ENCODE measurements at regions of chr6 and their contacts with region 1.

Region 1: DNA sequence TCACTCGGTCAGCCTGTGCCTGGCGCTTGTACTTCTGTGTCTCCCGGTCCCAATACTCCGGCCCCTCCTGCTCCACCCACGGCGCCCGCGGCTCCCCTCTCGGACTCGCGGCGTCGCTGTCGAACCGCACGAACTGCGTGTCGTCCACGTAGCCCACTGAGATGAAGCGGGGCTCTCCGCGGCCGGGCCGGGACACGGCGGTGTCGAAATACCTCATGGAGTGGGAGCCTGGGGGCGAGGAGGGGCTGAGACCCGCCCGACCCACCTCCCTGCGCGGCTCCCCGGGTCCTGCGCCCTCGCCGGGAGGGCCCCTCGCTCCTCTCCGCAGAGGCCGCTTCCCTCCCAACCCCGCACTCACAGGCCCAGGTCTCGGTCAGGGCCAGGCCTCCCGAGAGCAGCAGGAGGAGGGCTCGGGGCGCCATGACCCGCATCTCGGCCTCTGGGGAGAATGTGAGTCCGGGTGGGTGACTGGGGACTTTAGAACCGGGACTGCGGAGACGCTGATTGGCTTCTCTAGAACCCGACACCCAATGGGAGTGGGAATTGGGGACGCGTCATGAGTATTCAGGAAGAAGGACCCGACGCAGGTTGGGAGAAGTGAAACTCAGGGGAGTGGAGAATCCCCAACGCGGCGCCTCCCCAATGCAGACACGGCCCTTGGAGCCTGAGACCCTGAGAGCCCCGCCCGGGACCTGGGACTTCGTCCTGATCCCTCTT is at the start of gene HLA-C:
- DNase-seq: peak; percentile 95
- ATAC-seq: peak; percentile 97
- H3K4me3 ChIP-seq: peak within 1 kb of the TSS; percentile 58
- H3K27ac ChIP-seq: peak within 1 kb of the TSS; percentile 44
- H3K4me1 ChIP-seq: no peaks in the 10 kb centered on the region; the same call in 1 of the 2 replicates
- H3K27me3 ChIP-seq: peaks cover 3% of the 10 kb centered on the region
- CTCF ChIP-seq: 0 out of 2 replicates have a peak, but pooled peaks have one; percentile 11
- POLR2A ChIP-seq: peak; percentile 64
- RAD21 ChIP-seq: no peak
- total RNA-seq, gene HLA-C: 8.8 and 10.6 TPM in 2 replicates

Region 2: GRCh38 chr6:31139599-31139998 is 132.2 kb before region 1 on chr6:
- CTCF ChIA-PET with region 1: no interaction called
- POLR2A ChIA-PET with region 1: no interaction called
- dilution Hi-C with region 1: no loop called
- in situ Hi-C with region 1: no loop called
- intact Hi-C with region 1: loop called (anchors 5 kb)
- DNase-seq: peak; percentile 46
- ATAC-seq: peak; percentile 25
- H3K4me3 ChIP-seq: no peak overlapping the region
- H3K27ac ChIP-seq: no peak overlapping the region
- H3K4me1 ChIP-seq: peaks cover 13% of the 10 kb centered on the region
- H3K27me3 ChIP-seq: no peaks in the 10 kb centered on the region
- CTCF ChIP-seq: no peak
- POLR2A ChIP-seq: no peak
- RAD21 ChIP-seq: no peak

Region 3: GRCh38 chr6:31197559-31198305 is 74.1 kb before region 1 on chr6:
- CTCF ChIA-PET with region 1: no interaction called
- POLR2A ChIA-PET with region 1: no interaction called
- dilution Hi-C with region 1: no loop called
- in situ Hi-C with region 1: no loop called
- intact Hi-C with region 1: loop called (anchors 5 kb)
- DNase-seq: peak; percentile 72
- ATAC-seq: peak; percentile 90
- H3K4me3 ChIP-seq: peak overlapping the region; percentile 91
- H3K27ac ChIP-seq: peak overlapping the region; percentile 87
- H3K4me1 ChIP-seq: peaks cover under 1% of the 10 kb centered on the region; the same call in 1 of the 2 replicates
- H3K27me3 ChIP-seq: no peaks in the 10 kb centered on the region
- CTCF ChIP-seq: no peak
- POLR2A ChIP-seq: peak; percentile 59; the same call in 1 of the 2 replicates
- RAD21 ChIP-seq: no peak

Region 4: DNA sequence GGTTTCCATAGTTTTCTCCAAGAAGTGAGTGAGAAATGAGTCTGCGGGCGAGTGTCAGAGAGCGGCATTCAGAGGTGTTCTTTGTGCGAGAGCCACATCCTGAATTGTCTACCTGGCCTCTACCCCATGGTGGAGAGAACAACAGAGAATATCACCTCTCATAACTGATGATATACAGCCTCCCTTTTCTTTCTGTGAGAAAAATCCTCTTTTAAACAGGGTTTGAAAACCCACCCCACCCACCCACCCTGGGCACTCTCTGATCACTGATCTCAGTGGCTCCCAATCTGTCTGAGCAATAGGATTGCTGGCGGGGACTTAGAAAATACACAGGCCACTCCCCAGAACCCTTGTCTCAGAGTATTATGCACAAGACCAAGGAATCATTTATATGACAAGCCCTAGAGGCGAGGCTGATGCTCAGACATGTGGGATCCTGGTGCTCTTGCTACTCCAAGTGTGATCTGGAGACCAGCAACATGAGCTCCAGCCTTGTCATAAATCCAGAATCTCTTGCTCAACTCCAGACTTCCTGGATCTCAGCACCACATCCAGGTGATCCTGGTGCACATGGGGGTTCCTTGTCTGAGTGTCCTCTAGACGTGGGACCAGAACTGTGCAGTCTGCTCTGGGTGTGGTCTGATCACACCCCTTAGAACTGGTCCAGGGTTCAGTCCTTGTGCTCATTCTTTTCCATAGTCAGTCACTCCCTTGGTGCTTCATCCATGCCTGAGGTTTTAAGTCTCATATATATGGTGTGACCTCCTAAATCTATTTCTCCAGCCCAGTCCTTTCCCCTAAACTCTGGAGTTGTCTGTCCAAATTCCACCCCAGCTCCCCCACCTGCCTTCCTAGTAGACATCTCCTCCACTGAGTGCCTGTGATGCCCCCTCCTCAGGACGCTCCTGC is 79.9 kb after region 1 on chr6:
- CTCF ChIA-PET with region 1: no interaction called
- POLR2A ChIA-PET with region 1: no interaction called
- dilution Hi-C with region 1: no loop called
- in situ Hi-C with region 1: no loop called
- intact Hi-C with region 1: loop called (anchors 2 kb)
- DNase-seq: no peak
- ATAC-seq: no peak
- H3K4me3 ChIP-seq: no peak overlapping the region
- H3K27ac ChIP-seq: no peak overlapping the region
- H3K4me1 ChIP-seq: peaks cover 4% of the 10 kb centered on the region; the same call in 1 of the 2 replicates
- H3K27me3 ChIP-seq: peaks cover 31% of the 10 kb centered on the region
- CTCF ChIP-seq: no peak
- POLR2A ChIP-seq: no peak
- RAD21 ChIP-seq: no peak

Region 5: DNA sequence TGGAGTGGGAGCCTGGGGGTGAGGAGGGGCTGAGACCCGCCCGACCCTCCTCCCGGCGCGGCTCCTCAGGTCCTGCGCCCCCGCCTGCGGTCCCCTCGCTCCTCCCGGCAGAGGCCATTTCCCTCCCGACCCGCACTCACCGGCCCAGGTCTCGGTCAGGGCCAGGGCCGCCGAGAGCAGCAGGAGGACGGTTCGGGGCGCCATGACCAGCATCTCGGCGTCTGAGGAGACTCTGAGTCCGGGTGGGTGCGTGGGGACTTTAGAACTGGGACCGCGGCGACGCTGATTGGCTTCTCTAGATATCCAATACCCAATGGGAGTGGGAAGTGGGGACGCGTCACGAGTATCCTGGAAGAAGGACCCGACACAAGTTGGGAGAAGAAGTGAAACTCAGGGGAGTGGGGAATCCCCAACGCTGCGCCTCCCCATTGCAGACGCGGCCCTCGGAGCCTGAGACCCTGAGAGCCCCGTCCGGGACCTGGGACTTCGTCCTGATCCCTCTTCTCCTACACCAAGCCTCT is 85.2 kb after region 1 on chr6 and contains the start of gene HLA-B:
- CTCF ChIA-PET with region 1: no interaction called
- POLR2A ChIA-PET with region 1: no interaction called
- dilution Hi-C with region 1: no loop called
- in situ Hi-C with region 1: no loop called
- intact Hi-C with region 1: loop called (anchors 1 kb)
- DNase-seq: peak; percentile 87
- ATAC-seq: peak; percentile 96
- H3K4me3 ChIP-seq: peak within 1 kb of the TSS; percentile 64
- H3K27ac ChIP-seq: peak within 1 kb of the TSS; percentile 48; the same call in 1 of the 2 replicates
- H3K4me1 ChIP-seq: peaks cover 4% of the 10 kb centered on the region; the same call in 1 of the 2 replicates
- H3K27me3 ChIP-seq: peaks cover 15% of the 10 kb centered on the region
- CTCF ChIP-seq: no peak
- POLR2A ChIP-seq: peak; percentile 76
- RAD21 ChIP-seq: no peak
- total RNA-seq, gene HLA-B: 41.7 and 44.1 TPM in 2 replicates